HEK293 (cell line): ENCODE measurements at regions of chr7 and their contacts with region 1.

Region 1: DNA sequence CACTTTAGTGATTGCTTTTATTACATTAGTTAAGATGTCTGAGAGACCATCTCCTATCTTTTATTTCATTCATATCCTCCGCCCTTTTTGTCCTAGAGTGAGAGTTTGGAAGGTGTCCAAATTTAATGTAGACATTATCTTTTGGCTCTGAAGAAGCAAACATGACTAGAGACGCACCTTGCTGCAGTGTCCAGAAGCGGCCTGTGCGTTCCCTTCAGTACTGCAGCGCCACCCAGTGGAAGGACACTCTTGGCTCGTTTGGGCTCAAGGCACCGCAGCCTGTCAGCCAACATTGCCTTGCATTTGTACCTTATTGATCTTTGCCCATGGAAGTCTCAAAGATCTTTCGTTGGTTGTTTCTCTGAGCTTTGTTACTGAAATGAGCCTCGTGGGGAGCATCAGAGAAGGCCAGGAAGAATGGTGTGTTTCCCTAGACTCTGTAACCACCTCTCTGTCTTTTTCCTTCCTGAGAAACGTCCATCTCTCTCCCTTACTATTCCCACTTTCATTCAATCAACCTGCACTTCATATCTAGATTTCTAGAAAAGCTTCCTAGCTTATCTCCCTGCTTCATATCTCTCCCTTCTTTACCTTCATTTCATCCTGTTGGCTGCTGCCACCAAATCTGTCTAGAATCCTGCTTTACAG is 10.4 kb upstream of the CLCN1 start:
- H3K4me3 ChIP-seq: no peak overlapping the region
- H3K27ac ChIP-seq: no peak overlapping the region
- H3K4me1 ChIP-seq: no peaks in the 10 kb centered on the region
- CTCF ChIP-seq: peak; percentile 63

Region 2: GRCh38 chr7:143177374-143178119 is 128.0 kb before region 1 on chr7:
- CTCF ChIA-PET with region 1: no interaction called
- POLR2A ChIA-PET with region 1: no interaction called
- H3K4me3 ChIP-seq: no peak overlapping the region
- H3K27ac ChIP-seq: no peak overlapping the region
- H3K4me1 ChIP-seq: no peaks in the 10 kb centered on the region
- CTCF ChIP-seq: no peak

Region 3: GRCh38 chr7:143316492-143316891 is 10.9 kb after region 1 on chr7:
- CTCF ChIA-PET with region 1: interaction called, 30 read pairs
- POLR2A ChIA-PET with region 1: no interaction called
- H3K4me3 ChIP-seq: no peak overlapping the region
- H3K27ac ChIP-seq: no peak overlapping the region
- H3K4me1 ChIP-seq: no peaks in the 10 kb centered on the region
- CTCF ChIP-seq: no peak

Region 4: DNA sequence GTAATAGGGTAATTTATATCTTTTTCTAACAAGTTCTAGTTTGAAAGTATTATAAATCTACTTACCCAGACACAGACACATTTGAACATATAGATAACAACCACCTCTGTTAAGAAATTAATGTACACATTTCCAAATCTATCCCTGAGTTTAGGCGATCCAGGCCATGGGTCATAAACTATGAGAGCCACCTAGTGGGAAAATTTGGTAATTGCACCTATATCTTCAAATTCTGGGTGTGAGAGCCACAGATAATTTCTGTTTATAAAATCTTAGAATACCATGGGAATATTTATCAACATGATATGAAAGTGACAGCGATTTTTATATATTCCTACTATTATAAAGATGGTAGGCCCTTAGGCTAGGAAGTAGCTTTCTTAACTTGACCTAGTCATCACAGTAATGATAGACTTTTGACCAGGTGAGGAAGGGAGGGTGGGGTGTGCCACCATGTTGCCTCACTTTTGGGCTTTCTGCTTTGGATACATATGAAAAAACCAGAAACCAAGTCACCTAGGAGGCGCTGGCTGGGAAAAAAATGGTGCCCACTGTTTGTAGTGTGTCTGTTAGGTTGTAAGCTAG is 111.1 kb after region 1 on chr7:
- CTCF ChIA-PET with region 1: interaction called, 10 read pairs
- POLR2A ChIA-PET with region 1: no interaction called
- H3K4me3 ChIP-seq: no peak overlapping the region
- H3K27ac ChIP-seq: no peak overlapping the region
- H3K4me1 ChIP-seq: no peaks in the 10 kb centered on the region
- CTCF ChIP-seq: no peak; the same call in 1 of the 2 replicates